HepG2 (cell line): ENCODE measurements at regions of chrX and their contacts with region 1.

Region 1: DNA sequence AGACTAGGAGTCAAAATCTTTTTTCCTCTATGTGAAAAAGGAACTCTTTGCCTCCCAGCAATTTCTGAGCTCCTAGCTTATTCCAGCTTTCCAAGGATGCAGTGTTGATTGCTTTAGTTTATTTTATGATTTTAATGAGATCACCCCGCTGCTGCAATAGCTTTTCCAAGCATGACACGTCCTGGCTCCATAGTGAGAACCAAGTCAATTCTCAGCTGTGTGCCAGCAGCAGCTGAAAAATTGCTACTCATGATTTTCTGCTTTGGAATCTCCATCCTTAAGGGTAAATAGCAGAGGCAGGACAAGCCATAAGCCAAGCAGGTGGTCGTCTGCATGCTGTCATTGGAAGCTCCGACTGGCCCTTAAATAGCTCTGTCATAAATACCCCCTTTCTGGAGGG is 64.5 kb downstream of the FTHL17 start:
- DNase-seq: no peak
- ATAC-seq: no peak
- H3K4me3 ChIP-seq: no peak overlapping the region
- H3K27ac ChIP-seq: no peak overlapping the region
- H3K4me1 ChIP-seq: peaks cover 7% of the 10 kb centered on the region
- H3K27me3 ChIP-seq: no peaks in the 10 kb centered on the region
- CTCF ChIP-seq: no peak
- EP300 ChIP-seq: no peak
- POLR2A ChIP-seq: no peak
- RAD21 ChIP-seq: no peak

Region 2: GRCh38 chrX:30943984-30944780 is 63.1 kb before region 1 on chrX:
- CTCF ChIA-PET with region 1: no interaction called
- POLR2A ChIA-PET with region 1: no interaction called
- in situ Hi-C with region 1: loop called (anchors 10 kb)
- intact Hi-C with region 1: no loop called
- DNase-seq: no peak
- ATAC-seq: no peak
- H3K4me3 ChIP-seq: no peak overlapping the region
- H3K27ac ChIP-seq: no peak overlapping the region
- H3K4me1 ChIP-seq: peaks cover 12% of the 10 kb centered on the region; the same call in 1 of the 2 replicates
- H3K27me3 ChIP-seq: no peaks in the 10 kb centered on the region
- CTCF ChIP-seq: no peak
- EP300 ChIP-seq: no peak
- POLR2A ChIP-seq: no peak
- RAD21 ChIP-seq: no peak